Prostate gland (tissue), 2 donors: ENCODE measurements at regions of chr12 and their contacts with region 1.

Region 1: DNA sequence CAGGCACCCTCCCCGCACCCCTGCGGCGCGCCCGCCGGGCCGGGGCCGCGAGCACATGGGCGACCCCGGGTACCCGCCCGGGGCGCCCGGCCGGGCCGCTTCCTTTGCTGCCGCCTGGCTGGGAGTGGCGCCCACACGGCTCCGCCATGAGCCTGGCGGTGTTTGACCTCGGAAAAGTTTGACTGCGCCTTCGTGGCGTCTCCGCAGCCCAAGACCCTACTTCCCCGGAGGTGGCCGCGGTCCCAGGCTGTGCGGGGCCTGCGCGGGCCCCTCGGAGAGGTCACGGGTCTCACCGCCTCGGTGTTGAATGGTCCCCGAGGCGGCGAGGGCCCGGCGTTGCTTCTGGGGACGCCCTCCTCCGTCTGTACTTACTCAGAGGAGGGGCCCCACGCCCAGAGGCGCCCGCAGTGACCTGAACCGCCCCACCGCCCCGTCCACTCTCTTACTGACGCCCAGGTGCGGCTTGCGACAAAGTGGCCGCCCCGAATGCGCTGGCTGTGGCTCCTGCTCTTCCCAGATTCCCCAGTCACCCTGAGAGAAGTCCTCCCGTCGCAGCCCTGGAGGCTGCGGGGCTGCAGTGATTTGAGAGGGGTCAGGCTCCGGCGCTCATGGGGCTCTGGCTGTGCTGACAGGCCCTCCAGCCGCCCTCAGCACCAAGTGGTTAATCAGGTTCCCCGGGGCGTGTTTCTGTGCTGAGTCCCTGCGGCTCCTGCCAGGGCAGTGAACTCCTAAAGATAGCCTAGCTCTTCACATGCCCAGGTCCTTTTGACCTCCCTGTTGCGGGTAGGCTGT is 5.8 kb downstream of the KMT5A start:
- DNase-seq: peak; percentile 64
- H3K4me3 ChIP-seq: peak overlapping the region; percentile 58 to 70
- H3K27ac ChIP-seq: peak overlapping the region; percentile 88 to 94
- H3K4me1 ChIP-seq: peaks cover 28% of the 10 kb centered on the region
- H3K27me3 ChIP-seq: no peaks in the 10 kb centered on the region
- CTCF ChIP-seq: peak in 2 of 4 experiments; percentile 9 to 20
- POLR2A ChIP-seq: peak; percentile 34

Region 2: DNA sequence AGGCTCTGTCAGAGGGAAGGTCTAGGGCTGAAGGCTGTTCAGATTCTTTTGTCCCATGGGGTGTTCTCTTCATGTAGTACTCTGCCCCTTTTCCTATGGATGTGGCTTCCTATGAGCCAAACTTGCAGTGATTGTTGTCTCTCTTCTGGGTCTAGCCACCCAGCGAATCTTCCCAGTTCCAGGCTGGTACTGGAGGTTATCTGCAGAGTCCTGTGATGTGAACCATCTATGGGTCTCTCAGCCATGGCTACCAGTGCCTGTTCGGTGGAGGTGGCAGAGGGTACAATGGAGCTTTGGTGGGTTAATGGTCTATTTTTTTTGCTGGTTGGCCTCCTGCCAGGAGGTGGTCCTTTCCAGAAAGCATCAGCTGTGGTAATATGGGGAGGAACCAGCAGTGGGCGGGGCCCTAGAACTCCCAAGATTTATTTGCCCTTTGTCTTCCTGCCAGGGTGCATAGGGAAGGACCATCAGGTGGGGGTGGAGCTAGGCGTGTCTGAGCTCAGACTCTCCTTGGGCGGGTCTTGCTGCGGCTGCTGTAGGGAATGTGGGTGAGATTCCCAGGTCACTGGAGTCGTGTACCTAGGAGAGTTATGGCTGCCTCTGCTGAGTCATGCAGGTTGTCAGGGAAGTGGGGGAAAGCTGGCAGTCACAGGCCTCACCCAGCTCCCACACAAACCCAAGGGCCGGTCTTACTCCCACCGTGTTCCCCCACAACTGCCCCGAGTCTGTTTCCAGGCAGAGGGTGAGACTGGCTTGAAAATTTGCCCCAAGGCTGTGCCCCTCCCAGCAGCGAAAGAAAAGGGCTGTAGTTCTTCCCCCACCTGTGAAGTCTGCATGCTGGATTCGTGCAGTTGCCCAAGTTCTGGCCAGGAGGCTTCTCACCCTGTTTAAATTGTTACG is 139.0 kb before region 1 on chr12:
- intact Hi-C with region 1: no loop called
- DNase-seq: peak; percentile 69
- H3K4me3 ChIP-seq: no peak overlapping the region
- H3K27ac ChIP-seq: peak overlapping the region; percentile 27 to 62
- H3K4me1 ChIP-seq: peaks cover 9% of the 10 kb centered on the region
- H3K27me3 ChIP-seq: no peaks in the 10 kb centered on the region
- CTCF ChIP-seq: no peak
- POLR2A ChIP-seq: no peak

Region 3: DNA sequence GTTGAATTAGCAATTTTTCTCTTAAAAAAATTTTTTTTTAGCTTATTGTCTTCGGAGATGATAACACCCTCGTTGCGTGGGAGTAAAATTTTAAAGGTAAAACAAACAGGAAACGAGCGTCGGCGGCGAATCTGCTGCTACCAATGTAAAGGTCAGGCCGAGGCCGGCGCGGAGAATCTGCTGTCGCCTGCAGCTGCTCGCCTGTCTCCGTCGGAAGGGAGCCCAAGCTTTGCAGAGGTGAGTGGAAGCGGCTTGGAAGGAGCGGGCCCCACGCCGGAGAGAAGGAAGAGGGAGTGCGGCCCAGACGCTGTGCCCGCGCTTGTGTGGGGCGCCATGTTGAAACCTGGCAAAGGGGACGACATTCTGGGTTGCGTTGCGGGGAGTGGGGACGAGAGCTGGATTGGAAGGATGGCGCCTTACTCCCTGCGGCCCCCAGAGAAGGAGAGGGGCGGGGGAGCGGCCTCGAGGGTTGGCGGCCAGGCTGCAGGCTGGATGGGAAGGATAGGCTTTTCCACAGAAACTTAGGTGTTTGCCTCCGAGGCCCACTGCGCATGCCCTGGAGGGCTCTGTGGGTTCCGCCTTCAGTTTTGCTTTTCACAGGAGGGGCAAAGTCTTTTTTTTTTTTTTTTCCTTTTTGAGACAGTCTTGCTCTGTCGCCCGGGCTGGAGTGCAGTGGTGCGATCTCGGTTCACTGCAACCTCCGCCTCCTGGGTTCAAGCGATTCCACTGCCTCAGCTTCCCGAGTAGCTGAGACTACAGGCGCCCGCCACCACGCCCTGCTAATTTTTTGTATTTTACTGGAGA is 68.4 kb after region 1 on chr12 and contains the start of gene SNRNP35:
- intact Hi-C with region 1: loop called (anchors 10 kb)
- DNase-seq: peak; percentile 66
- H3K4me3 ChIP-seq: peak within 1 kb of the TSS; percentile 84 to 85
- H3K27ac ChIP-seq: peak within 1 kb of the TSS; percentile 99
- H3K4me1 ChIP-seq: no peaks in the 10 kb centered on the region
- H3K27me3 ChIP-seq: no peaks in the 10 kb centered on the region
- CTCF ChIP-seq: no peak
- POLR2A ChIP-seq: peak; percentile 23
- total RNA-seq, gene SNRNP35: 16.6 to 22.6 TPM

Region 4: DNA sequence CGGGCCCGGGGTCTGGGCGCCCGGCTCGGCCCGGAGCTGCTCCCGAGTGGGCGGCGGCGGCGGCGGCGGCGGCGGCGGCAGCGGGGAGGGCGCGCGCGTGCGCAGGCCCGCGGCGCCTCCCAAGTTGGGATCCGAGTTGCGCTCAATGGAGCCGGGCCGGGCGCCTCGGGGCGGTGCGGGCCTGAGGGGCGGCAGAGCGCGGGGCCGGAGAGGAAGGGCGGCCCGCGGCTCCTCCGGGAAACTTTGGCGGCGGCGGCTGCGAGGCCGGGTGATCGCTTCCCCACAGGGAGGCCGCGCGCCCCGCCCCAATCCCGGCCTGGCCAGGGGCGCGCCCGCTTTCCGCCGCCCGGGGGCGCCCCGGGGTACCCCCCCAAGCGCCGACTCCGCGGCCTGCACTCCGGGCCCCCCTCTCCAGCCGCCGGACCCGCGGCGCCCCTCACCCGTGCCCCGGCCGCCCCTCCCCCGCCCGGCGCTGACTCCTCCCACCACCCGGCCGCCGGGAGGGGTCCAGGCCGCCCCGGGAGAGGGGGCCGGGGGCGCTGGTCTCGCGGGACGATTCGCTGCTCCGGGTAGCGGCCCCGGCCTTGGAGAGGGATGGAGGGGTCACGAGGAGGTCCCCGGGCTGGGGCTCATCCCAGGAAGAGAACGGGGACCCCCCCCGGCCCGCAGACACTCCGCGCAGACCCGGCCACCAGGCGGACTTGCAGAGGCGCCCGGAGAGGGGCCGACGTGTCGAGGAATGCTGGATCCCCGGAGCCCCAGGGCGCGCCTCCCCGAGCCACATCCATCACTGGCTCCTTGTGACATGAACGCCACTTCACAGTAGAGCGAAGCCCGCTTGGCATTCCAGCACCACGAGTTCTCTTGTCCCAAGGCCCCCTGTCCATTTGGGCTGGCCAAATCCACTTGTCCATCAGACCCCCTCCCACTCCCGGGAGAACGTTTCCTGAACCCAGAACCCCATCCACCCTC is 144.2 kb after region 1 on chr12 and contains the start of gene RILPL1:
- intact Hi-C with region 1: loop called (anchors 5 kb)
- DNase-seq: peak; percentile 20
- H3K4me3 ChIP-seq: peak within 1 kb of the TSS; percentile 76 to 80
- H3K27ac ChIP-seq: peak within 1 kb of the TSS; percentile 81 to 90
- H3K4me1 ChIP-seq: peaks cover 8% of the 10 kb centered on the region
- H3K27me3 ChIP-seq: no peaks in the 10 kb centered on the region
- CTCF ChIP-seq: peak in 3 of 4 experiments; percentile 33 to 38 (median 34)
- POLR2A ChIP-seq: no peak
- total RNA-seq, gene RILPL1: 8.6 to 25.7 TPM

Region 5: DNA sequence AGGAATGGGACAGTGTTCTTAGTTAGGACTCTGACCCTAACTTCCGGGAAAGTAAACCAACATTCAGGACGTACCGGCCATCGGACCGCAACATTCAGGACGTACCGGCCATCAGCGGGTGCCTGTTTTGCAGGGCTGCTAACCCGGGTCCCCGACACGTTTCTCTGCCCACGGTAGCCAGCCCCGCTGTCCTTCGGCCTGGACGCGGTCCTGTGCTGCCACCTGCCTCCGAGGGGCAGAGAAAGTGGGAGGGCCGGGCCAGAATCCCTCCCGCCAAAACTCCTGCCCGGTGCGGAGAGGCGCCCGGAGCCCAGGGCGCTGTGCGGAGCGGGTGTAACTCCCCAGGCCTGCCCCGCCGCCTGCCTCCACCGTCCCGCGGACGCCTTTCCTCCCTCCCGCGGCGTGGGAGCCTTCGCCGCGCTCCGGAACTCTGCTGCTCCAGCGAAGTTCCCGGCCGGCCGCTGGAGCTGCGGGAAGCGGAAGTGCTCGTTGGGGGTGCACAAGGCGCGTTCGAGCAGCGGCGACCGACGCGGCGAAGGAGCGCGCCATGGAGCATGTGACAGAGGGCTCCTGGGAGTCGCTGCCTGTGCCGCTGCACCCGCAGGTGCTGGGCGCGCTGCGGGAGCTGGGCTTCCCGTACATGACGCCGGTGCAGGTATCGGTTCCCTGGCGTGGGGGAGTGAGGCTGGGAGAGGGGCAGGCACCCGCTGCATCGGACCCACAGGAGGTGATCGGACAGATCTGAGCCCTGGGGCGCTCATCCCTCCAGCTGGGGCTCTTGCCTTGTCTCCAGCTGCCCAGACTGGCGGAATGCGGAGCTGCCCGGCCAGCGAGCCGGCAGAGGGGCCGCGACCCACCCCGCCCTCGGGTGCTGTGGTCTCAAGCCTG is 212.1 kb after region 1 on chr12 and contains the start of gene DDX55:
- intact Hi-C with region 1: no loop called
- DNase-seq: peak; percentile 72
- H3K4me3 ChIP-seq: peak within 1 kb of the TSS; percentile 58 to 86
- H3K27ac ChIP-seq: peak within 1 kb of the TSS; percentile 84 to 89
- H3K4me1 ChIP-seq: no peaks in the 10 kb centered on the region
- H3K27me3 ChIP-seq: no peaks in the 10 kb centered on the region
- CTCF ChIP-seq: peak; percentile 49 to 75 (median 71)
- POLR2A ChIP-seq: no peak
- total RNA-seq, gene DDX55: 13.7 to 24.4 TPM